Lower leg skin (tissue), 4 donors: ENCODE measurements at regions of chr18 and their contacts with region 1.

Region 1: DNA sequence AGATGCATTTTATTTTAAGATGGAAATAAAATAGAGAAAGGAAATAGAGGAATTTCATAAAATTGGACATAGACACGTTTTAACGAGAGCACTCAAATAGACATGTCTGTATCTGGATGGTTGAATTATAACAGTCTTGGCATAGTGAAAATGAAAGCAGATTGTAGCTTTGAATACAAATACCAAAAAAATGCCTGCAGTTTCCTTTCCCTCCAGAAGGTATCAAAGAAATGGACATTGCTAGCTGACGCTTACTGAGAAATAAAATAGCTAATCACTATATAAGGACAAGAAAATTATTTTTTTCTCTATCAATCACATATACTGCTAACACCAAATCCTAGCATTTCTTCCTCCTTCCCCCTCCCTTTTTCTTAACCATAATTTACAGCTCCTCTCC is 11.4 kb upstream of the MAPRE2 start:
- DNase-seq: no peak
- H3K4me3 ChIP-seq: no peak overlapping the region
- CTCF ChIP-seq: no peak
- POLR2A ChIP-seq: no peak

Region 2: GRCh38 chr18:35071819-35072247 is 42.1 kb after region 1 on chr18:
- intact Hi-C with region 1: loop called (anchors 10 kb)
- DNase-seq: no peak
- H3K4me3 ChIP-seq: no peak overlapping the region
- CTCF ChIP-seq: no peak
- POLR2A ChIP-seq: no peak

Region 3: GRCh38 chr18:35203067-35203466 is 173.3 kb after region 1 on chr18:
- intact Hi-C with region 1: no loop called
- DNase-seq: no peak
- H3K4me3 ChIP-seq: no peak overlapping the region
- CTCF ChIP-seq: no peak
- POLR2A ChIP-seq: no peak